A549 (cell line): ENCODE measurements at regions of chr11 and their contacts with region 1.

Region 1: GRCh38 chr11:65111744-65112414 is at the start of gene TM7SF2:
- DNase-seq: peak; percentile 95 to 97
- ATAC-seq: peak; percentile 63 to 86
- H3K4me3 ChIP-seq: peak within 1 kb of the TSS; percentile 52
- H3K27ac ChIP-seq: peak within 1 kb of the TSS; percentile 73 to 88
- H3K4me1 ChIP-seq: peaks cover 31% of the 10 kb centered on the region; the same call in 2 of the 3 replicates
- CTCF ChIP-seq: no peak
- EP300 ChIP-seq: no peak
- POLR2A ChIP-seq: peak; percentile 93
- RAD21 ChIP-seq: no peak
- polyA plus RNA-seq, gene TM7SF2: 8.2 and 9.6 TPM in 2 replicates

Region 2: GRCh38 chr11:64729851-64730382 is 382.0 kb before region 1 on chr11:
- CTCF ChIA-PET with region 1: no interaction called
- POLR2A ChIA-PET with region 1: no interaction called
- DNase-seq: no peak
- ATAC-seq: peak; percentile 63 to 82; a peak in 5 of 6 replicates
- H3K4me3 ChIP-seq: no peak overlapping the region
- H3K27ac ChIP-seq: no peak overlapping the region
- H3K4me1 ChIP-seq: peaks cover 5% of the 10 kb centered on the region; the same call in 2 of the 3 replicates
- CTCF ChIP-seq: no peak
- EP300 ChIP-seq: no peak
- POLR2A ChIP-seq: no peak
- RAD21 ChIP-seq: no peak

Region 3: DNA sequence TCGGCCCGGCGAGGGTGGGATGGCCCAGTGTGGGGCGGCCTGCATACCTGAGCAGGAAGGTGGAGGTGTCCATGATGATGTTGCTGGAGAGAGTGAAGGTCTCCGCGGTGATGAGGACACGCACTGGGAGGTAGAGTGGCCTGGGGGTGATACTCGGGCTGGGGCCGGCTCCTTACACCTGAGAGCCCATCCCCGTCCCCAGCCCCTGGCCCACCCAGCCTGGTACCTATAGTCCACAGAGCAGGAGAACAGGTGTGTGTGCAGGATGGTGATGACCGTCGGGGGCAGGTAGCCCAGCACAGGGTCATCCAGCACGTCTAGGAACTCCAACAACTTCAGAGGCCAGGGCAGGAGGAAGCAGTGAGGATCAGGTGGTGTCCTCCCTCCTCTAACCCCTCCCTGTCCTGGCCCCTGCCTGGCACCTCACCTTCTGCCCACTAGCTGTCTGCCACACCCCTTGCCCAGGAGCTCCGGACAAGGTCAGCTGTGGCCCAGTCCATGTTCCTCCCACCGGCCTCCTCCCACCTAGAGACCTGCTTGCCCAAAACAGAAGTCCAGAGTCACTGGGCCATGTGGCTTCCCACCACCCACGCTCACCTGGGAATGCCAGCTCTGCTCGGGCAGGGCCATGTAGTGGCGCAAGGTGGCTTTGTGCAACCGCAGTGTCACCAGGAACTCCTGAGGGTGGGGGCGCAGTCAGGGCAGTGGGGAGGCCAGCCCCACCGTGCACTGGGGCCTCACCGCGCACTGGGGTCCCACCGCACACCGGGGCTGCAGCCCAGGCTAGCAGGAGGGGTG is 206.2 kb before region 1 on chr11:
- CTCF ChIA-PET with region 1: no interaction called
- POLR2A ChIA-PET with region 1: no interaction called
- DNase-seq: no peak
- ATAC-seq: no peak
- H3K4me3 ChIP-seq: no peak overlapping the region
- H3K27ac ChIP-seq: no peak overlapping the region
- H3K4me1 ChIP-seq: no peaks in the 10 kb centered on the region; the same call in 2 of the 3 replicates
- CTCF ChIP-seq: no peak
- EP300 ChIP-seq: no peak
- POLR2A ChIP-seq: no peak
- RAD21 ChIP-seq: no peak

Region 4: DNA sequence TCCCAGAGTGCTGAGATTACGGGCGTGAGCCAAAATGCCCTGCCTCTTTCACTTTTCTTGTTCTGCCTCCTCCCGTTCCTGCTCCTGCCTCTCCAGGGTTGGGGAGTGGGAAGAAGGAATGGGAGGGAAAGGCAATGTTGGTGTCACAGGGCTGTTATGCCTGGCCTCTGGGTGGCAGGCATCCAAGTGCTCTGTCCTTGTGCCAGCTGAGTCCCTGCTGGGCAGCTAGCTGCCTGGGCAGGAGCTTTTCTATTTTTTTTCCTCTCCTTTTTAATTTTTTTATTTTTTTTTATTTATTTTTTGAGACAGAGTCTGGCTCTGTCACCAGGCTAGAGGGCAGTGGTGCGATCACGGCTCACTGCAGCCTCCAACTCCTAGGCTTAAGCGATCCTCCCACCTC is 74.9 kb before region 1 on chr11:
- CTCF ChIA-PET with region 1: interaction called, 10 read pairs
- POLR2A ChIA-PET with region 1: no interaction called
- DNase-seq: no peak
- ATAC-seq: no peak
- H3K4me3 ChIP-seq: no peak overlapping the region
- H3K27ac ChIP-seq: no peak overlapping the region
- H3K4me1 ChIP-seq: peaks cover 6% of the 10 kb centered on the region; the same call in 2 of the 3 replicates
- CTCF ChIP-seq: no peak
- EP300 ChIP-seq: no peak
- POLR2A ChIP-seq: no peak
- RAD21 ChIP-seq: no peak

Region 5: DNA sequence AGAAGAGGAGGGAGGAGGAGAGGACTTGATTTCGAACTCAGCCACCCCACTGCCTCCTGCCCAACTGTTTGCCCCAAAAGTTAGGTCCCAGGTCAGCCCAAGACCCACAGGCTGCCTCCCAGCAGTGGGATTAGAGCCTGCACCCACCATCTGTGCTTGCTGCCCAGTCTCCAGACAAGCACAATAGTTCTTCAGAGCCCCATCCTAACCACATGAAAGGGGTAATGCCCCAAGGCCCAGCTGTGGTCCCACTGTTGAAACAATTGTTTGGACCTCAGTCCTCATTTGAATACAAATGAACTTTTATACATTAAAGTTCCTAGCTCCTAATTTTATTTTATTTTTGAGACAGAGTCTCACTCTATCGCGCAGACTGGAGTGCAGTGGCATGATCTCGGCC is 21.3 kb before region 1 on chr11:
- CTCF ChIA-PET with region 1: interaction called, 153 read pairs
- POLR2A ChIA-PET with region 1: interaction called, 8 read pairs
- DNase-seq: no peak
- ATAC-seq: no peak
- H3K4me3 ChIP-seq: no peak overlapping the region
- H3K27ac ChIP-seq: no peak overlapping the region
- H3K4me1 ChIP-seq: peaks cover 1% of the 10 kb centered on the region; the same call in 1 of the 3 replicates
- CTCF ChIP-seq: no peak
- EP300 ChIP-seq: no peak
- POLR2A ChIP-seq: no peak
- RAD21 ChIP-seq: no peak

Region 6: DNA sequence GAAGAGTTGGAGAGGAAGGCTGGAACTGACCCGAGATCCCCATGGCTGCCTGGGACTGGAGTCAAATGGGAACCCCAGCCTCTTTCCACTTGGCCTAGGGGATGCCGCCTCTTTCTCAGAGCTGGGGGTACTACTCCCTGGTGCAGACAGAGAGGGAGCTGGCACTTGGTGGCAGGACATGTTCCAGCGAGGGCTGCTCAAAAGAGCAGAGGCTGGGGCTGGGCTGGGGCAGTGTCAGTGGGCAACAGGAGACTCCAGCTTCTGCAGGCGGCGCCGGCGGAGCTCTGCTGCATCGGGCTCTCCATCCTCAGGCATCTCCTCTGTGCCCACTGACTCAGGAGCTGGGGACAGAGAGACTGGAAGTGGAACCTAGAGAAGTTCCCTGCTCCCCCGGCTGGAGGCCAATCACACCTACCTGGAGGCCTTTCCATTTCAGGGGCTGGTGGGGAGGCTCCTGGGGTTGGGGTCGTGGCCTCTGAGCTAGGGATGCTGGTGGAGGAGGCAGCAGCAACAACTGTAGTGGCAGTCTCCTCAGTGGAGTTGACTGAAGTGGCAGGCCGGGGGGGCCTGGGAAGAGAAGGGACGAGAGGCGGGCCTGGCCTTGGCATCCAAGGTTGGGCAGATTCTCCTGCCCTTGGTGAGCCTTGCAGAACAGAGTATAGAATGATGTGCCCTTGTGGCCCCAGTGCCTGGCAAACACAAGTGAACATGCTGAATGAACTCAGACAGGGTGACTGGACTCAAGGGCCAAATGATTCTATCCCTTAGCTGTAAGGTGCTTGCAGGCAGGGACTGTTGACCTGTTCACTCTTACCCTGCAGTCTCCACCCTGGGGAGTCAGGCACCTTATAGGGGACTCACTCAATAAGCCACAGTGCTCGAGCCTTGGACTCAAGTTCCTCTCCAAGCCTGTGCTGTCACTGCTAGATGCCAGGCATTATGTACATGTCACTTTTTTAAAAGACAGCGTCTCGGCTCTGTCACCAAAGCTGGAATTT is 16.6 kb after region 1 on chr11:
- CTCF ChIA-PET with region 1: interaction called, 75 read pairs
- POLR2A ChIA-PET with region 1: interaction called, 3 read pairs
- DNase-seq: no peak
- ATAC-seq: no peak
- H3K4me3 ChIP-seq: no peak overlapping the region
- H3K27ac ChIP-seq: no peak overlapping the region
- H3K4me1 ChIP-seq: peaks cover 9% of the 10 kb centered on the region
- CTCF ChIP-seq: no peak
- EP300 ChIP-seq: no peak
- POLR2A ChIP-seq: no peak
- RAD21 ChIP-seq: no peak

Region 7: GRCh38 chr11:65251476-65251875 is 139.6 kb after region 1 on chr11:
- CTCF ChIA-PET with region 1: interaction called, 16 read pairs
- POLR2A ChIA-PET with region 1: no interaction called
- DNase-seq: no peak
- ATAC-seq: 0 out of 6 replicates have a peak, but pooled peaks of 1 of the 2 experiments have one; percentile 5
- H3K4me3 ChIP-seq: no peak overlapping the region
- H3K27ac ChIP-seq: no peak overlapping the region
- H3K4me1 ChIP-seq: no peaks in the 10 kb centered on the region
- CTCF ChIP-seq: no peak
- EP300 ChIP-seq: no peak
- POLR2A ChIP-seq: no peak
- RAD21 ChIP-seq: no peak